Astrocyte of the cerebellum (primary cell): ENCODE measurements at regions of chr10 and their contacts with region 1.

Region 1: GRCh38 chr10:9986786-9987185 is 1030.9 kb upstream of the CELF2 start:
- DNase-seq: no peak
- H3K4me3 ChIP-seq: no peak overlapping the region
- CTCF ChIP-seq: no peak

Region 2: GRCh38 chr10:9944690-9945089 is 42.1 kb before region 1 on chr10:
- in situ Hi-C with region 1: no loop called
- DNase-seq: no peak
- H3K4me3 ChIP-seq: no peak overlapping the region
- CTCF ChIP-seq: no peak

Region 3: GRCh38 chr10:10020945-10021344 is 34.2 kb after region 1 on chr10:
- in situ Hi-C with region 1: loop called (anchors 5 kb)
- DNase-seq: no peak
- H3K4me3 ChIP-seq: no peak overlapping the region
- CTCF ChIP-seq: no peak